Mammary epithelial cell (primary cell): ENCODE measurements at regions of chr2 and their contacts with region 1.

Region 1: DNA sequence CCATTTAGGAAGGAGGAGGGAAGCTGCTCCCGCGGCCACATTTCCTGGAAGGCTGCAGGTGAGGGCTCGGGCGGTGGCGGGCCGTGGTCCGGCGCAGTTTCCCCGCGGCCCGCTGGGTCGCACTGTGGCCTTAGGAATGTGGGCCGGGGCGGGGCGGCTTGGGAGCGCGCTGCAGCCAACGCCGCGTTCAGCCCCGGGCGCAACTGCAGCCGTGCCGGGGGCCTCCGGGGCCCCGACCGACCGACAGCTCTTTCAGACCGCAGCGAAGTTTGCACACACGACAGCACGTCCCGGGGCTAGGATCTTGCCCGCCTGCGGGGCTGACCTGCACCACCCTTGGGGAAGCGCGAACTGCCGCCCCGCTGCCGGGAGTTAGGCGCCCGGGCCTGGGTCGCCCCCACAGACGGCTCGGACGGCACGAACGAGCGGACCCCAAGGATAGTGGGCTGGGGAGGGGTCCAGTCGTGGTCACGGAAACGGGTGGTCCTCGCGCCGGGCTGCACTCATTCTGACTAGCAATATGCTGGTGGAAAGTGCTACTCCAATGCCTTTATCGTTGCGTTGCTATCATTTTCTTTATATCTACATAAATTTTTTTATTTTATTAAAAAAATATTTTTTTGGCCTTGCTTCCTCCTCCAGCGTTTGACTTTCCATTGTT is 69.9 kb upstream of the DLX2 start:
- DNase-seq: peak; percentile 66
- H3K4me3 ChIP-seq: peak overlapping the region; percentile 56 to 74 (median 64)
- H3K27ac ChIP-seq: peak overlapping the region; percentile 53
- H3K4me1 ChIP-seq: peaks cover 17% of the 10 kb centered on the region
- H3K27me3 ChIP-seq: no peaks in the 10 kb centered on the region
- CTCF ChIP-seq: peak; percentile 70 to 87

Region 2: DNA sequence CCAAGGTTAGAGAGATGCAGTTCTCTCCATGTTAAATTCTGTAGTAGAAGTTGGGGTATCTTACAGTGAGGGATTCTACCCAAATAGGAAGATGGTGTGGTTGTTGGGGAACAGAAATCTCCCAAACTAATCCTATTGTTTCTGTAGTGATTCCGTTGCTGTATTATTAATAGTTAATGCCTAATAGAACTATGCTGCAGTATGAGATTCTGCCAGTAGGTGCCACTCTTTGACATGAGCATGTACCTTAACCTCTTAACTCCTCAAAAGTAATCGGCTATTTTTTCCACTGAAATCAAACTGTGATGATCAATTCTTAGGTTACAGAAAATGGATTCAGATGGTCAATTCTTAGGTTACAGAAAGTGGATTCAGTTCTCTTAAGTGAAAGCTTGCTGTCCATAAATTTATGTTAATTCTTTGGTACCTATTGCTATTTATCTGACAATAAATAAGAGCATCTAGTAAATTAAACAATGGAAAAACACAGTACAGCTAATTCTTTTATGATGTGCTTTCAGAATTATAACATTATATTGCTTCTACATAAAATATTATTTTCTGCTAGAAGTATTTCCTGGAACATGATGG is 27.9 kb after region 1 on chr2:
- CTCF ChIA-PET with region 1: no interaction called
- dilution Hi-C with region 1: no loop called
- in situ Hi-C with region 1: no loop called
- intact Hi-C with region 1: loop called (anchors 1 kb)
- DNase-seq: peak; percentile 47
- H3K4me3 ChIP-seq: no peak overlapping the region
- H3K27ac ChIP-seq: no peak overlapping the region
- H3K4me1 ChIP-seq: peaks cover 35% of the 10 kb centered on the region
- H3K27me3 ChIP-seq: no peaks in the 10 kb centered on the region
- CTCF ChIP-seq: peak; percentile 67 to 76

Region 3: GRCh38 chr2:172226244-172227061 is 53.8 kb after region 1 on chr2:
- CTCF ChIA-PET with region 1: no interaction called
- dilution Hi-C with region 1: no loop called
- in situ Hi-C with region 1: loop called in 1 of 2 experiments (anchors 10 kb)
- intact Hi-C with region 1: loop called (anchors 1 kb)
- DNase-seq: peak; percentile 56
- H3K4me3 ChIP-seq: no peak overlapping the region
- H3K27ac ChIP-seq: peak overlapping the region; percentile 63
- H3K4me1 ChIP-seq: peaks cover 52% of the 10 kb centered on the region
- H3K27me3 ChIP-seq: no peaks in the 10 kb centered on the region
- CTCF ChIP-seq: peak; percentile 72 to 78

Region 4: DNA sequence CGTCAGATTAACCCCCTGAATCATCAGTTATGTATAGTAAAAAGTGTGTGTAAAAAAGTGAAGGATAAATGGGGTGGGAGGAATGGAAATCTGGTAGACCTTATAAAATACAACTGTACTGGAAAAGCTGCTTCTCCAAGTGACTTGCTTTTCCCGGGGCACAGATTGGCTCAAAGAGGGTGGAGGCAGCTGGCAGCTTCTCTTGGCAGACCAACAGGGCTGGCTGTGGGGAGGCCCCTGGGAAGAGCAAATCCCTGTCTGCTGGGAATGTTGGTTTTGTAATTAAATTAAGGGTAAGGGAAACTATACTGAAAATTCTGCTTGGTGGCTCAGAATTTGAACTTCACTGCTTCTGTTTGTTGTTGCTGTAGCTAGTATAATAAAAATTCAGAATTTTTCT is 84.2 kb after region 1 on chr2:
- CTCF ChIA-PET with region 1: no interaction called
- dilution Hi-C with region 1: no loop called
- in situ Hi-C with region 1: no loop called
- intact Hi-C with region 1: no loop called
- DNase-seq: no peak
- H3K4me3 ChIP-seq: no peak overlapping the region
- H3K27ac ChIP-seq: no peak overlapping the region
- H3K4me1 ChIP-seq: peaks cover 42% of the 10 kb centered on the region
- H3K27me3 ChIP-seq: no peaks in the 10 kb centered on the region
- CTCF ChIP-seq: no peak

Region 5: GRCh38 chr2:172323256-172323655 is 150.6 kb after region 1 on chr2:
- CTCF ChIA-PET with region 1: no interaction called
- dilution Hi-C with region 1: no loop called
- in situ Hi-C with region 1: no loop called
- intact Hi-C with region 1: no loop called
- DNase-seq: peak; percentile 50
- H3K4me3 ChIP-seq: no peak overlapping the region
- H3K27ac ChIP-seq: no peak overlapping the region
- H3K4me1 ChIP-seq: peaks cover 3% of the 10 kb centered on the region
- H3K27me3 ChIP-seq: no peaks in the 10 kb centered on the region
- CTCF ChIP-seq: no peak

Region 6: GRCh38 chr2:172427256-172427989 is 254.8 kb after region 1 on chr2 and contains the start of gene ITGA6:
- CTCF ChIA-PET with region 1: no interaction called
- dilution Hi-C with region 1: no loop called
- in situ Hi-C with region 1: no loop called
- intact Hi-C with region 1: loop called (anchors 2 kb)
- DNase-seq: peak; percentile 91
- H3K4me3 ChIP-seq: peak within 1 kb of the TSS; percentile 86 to 95 (median 87)
- H3K27ac ChIP-seq: peak within 1 kb of the TSS; percentile 93
- H3K4me1 ChIP-seq: peaks cover 23% of the 10 kb centered on the region
- H3K27me3 ChIP-seq: no peaks in the 10 kb centered on the region
- CTCF ChIP-seq: peak in 1 of 2 donors; percentile 24
- total RNA-seq, gene ITGA6: 562 to 887 TPM

Region 7: GRCh38 chr2:172710584-172711024 is 538.0 kb after region 1 on chr2:
- CTCF ChIA-PET with region 1: no interaction called
- dilution Hi-C with region 1: no loop called
- in situ Hi-C with region 1: loop called in 1 of 2 experiments (anchors 25 kb)
- intact Hi-C with region 1: no loop called
- DNase-seq: peak; percentile 94
- H3K4me3 ChIP-seq: no peak overlapping the region
- H3K27ac ChIP-seq: no peak overlapping the region
- H3K4me1 ChIP-seq: peaks cover 6% of the 10 kb centered on the region
- H3K27me3 ChIP-seq: no peaks in the 10 kb centered on the region
- CTCF ChIP-seq: peak; percentile 78 to 84